ENCODE measurements at regions of chr18 and their contacts with region 1.

Region 1: GRCh38 chr18:79951578-79952455 is at the start of gene SLC66A2:
- DNase-seq: peak; percentile 80 to 98 (median 90)
- ATAC-seq: peak; percentile 94
- H3K4me3 ChIP-seq: peak within 1 kb of the TSS; percentile 65
- H3K4me3 Mint-ChIP-seq: peak within 1 kb of the TSS; percentile 78 to 93 (median 87)
- H3K27ac ChIP-seq: peak within 1 kb of the TSS; percentile 88
- H3K27ac Mint-ChIP-seq: peak within 1 kb of the TSS; percentile 55 to 90 (median 80)
- H3K4me1 ChIP-seq: peaks cover 7 to 25% of the 10 kb centered on the region in 2 donors
- H3K4me1 Mint-ChIP-seq: peaks cover 16 to 37% (median 32%) of the 10 kb centered on the region in 7 donors
- H3K27me3 ChIP-seq: no peaks in the 10 kb centered on the region
- H3K27me3 Mint-ChIP-seq: no peaks in the 10 kb centered on the region
- total RNA-seq, gene SLC66A2: 30.7 to 106 (median 40.4) TPM

Region 2: DNA sequence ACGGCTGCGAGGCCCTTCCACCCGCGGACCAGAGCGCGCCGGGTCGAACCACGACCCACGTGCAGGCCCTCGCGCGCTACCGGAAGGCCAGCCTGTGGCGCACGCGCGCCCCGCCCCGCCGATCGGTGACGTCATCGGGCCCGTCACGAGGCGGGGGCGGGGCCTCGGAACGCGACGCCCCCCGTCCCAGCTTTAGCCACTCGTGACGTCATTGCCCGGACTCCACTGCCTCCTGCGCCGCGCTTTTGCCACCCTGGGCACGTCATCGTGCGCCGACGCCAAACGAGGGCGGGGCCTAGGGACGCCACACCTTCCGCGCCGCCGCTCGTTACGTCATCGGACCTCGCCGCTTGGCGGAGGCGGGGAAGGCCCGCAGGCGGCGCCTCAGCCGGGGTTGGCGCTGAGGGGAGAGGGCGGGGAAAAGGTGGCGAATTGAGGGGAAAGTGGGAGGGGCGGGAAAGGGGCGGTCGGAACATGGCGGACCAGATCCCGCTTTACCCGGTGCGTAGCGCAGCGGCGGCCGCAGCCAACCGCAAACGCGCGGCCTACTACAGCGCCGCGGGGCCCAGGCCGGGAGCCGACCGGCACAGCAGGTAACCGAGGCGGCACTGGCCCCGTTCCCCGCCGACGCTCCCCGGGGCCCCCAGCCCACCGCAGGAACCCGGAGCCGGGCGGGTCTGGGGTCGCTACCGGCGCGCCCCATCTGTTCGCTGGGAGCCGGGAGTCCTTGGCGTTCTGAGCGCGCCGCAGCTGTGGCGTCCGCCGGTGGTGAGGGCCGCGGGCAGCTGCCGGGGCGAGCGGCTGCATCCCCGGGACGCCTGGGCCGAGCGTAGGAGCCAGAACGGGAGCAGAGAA is 882.7 kb before region 1 on chr18 and contains the start of gene ATP9B:
- CTCF ChIA-PET with region 1: no interaction called
- POLR2A ChIA-PET with region 1: no interaction called
- intact Hi-C with region 1: loop called (anchors 2 kb)
- DNase-seq: peak; percentile 97 to 100 (median 99)
- ATAC-seq: peak; percentile 91
- H3K4me3 ChIP-seq: peak within 1 kb of the TSS; percentile 59
- H3K4me3 Mint-ChIP-seq: peak within 1 kb of the TSS; percentile 85 to 98 (median 94)
- H3K27ac ChIP-seq: peak within 1 kb of the TSS; percentile 98
- H3K27ac Mint-ChIP-seq: peak within 1 kb of the TSS; percentile 98 to 100 (median 99)
- H3K4me1 ChIP-seq: peaks cover 12 to 29% of the 10 kb centered on the region in 2 donors
- H3K4me1 Mint-ChIP-seq: peaks cover 28 to 63% (median 51%) of the 10 kb centered on the region in 7 donors
- H3K27me3 ChIP-seq: no peaks in the 10 kb centered on the region
- H3K27me3 Mint-ChIP-seq: peaks cover under 1 to 21% (median 5%) of the 10 kb centered on the region in 5 donors
- total RNA-seq, gene ATP9B: 36.1 to 90.5 (median 90.0) TPM

Region 3: GRCh38 chr18:79400091-79400590 is 551.7 kb before region 1 on chr18:
- CTCF ChIA-PET with region 1: no interaction called
- POLR2A ChIA-PET with region 1: interaction called, 4 read pairs
- intact Hi-C with region 1: loop called (anchors 5 kb)
- DNase-seq: peak in 8 of 9 donors; percentile 38 to 65 (median 52)
- ATAC-seq: peak; percentile 45
- H3K4me3 ChIP-seq: peak overlapping the region; percentile 52
- H3K4me3 Mint-ChIP-seq: peak overlapping the region in 2 of 10 donors; percentile 90 to 91
- H3K27ac ChIP-seq: peak overlapping the region; percentile 95
- H3K27ac Mint-ChIP-seq: no peak overlapping the region
- H3K4me1 ChIP-seq: peaks cover 22 to 43% of the 10 kb centered on the region in 2 donors
- H3K4me1 Mint-ChIP-seq: peaks cover 31 to 64% (median 52%) of the 10 kb centered on the region in 7 donors
- H3K27me3 ChIP-seq: no peaks in the 10 kb centered on the region
- H3K27me3 Mint-ChIP-seq: no peaks in the 10 kb centered on the region

Region 4: GRCh38 chr18:79528846-79529245 is 423.0 kb before region 1 on chr18:
- CTCF ChIA-PET with region 1: no interaction called
- POLR2A ChIA-PET with region 1: no interaction called
- intact Hi-C with region 1: loop called in 1 of 2 experiments (anchors 10 kb)
- DNase-seq: peak; percentile 47 to 88 (median 77)
- ATAC-seq: peak; percentile 65
- H3K4me3 ChIP-seq: no peak overlapping the region
- H3K4me3 Mint-ChIP-seq: peak overlapping the region in 1 of 10 donors; percentile 6
- H3K27ac ChIP-seq: no peak overlapping the region
- H3K27ac Mint-ChIP-seq: peak overlapping the region in 6 of 9 donors; percentile 30 to 85 (median 79)
- H3K4me1 ChIP-seq: peaks cover 8 to 21% of the 10 kb centered on the region in 2 donors
- H3K4me1 Mint-ChIP-seq: peaks cover 7 to 49% (median 33%) of the 10 kb centered on the region in 7 donors
- H3K27me3 ChIP-seq: no peaks in the 10 kb centered on the region
- H3K27me3 Mint-ChIP-seq: no peaks in the 10 kb centered on the region

Region 5: DNA sequence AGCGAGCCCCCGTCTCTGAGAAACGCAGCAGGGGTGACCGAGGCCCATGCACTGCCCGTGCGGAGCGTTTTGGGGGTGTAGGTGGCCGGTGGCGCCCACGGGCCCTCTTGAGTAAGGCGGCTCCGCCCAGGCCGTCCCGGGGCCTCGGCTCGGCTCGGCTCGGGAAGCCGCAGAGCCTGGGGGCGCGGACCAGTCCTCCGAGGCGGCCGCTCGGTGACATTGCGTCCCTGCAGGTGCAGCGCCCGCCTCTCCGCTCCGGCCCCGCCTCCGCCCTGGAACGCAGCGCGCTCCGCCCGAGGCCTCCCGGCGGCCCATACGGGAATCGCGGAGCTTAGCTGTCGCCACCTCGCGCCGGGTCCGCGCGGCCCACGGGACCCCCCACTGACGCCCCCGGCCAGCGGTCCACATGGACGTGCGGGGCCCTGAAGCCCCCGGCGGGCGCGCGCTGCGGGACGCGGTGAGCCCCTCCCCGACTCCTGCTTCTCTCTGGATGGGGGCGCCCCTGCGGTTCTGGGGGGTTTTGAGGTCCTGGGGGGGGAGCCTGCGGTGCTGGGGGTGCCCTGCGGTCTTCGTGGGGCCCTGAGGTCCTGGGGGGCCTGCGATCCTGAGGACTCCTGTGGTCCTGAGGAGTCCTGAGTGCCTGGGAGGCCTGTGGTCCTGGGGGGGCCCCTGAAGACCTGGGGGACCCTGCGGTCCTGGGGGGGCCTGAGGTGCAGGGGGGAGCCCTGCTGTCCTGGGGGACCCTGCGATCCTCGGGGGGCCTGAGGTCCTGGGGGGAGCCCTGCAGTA is 12.7 kb after region 1 on chr18 and contains the start of gene HSBP1L1:
- CTCF ChIA-PET with region 1: interaction called, 3 read pairs
- POLR2A ChIA-PET with region 1: interaction called, 8 read pairs
- intact Hi-C with region 1: loop called (anchors 1 kb)
- DNase-seq: peak; percentile 60 to 75 (median 69)
- ATAC-seq: peak; percentile 89
- H3K4me3 ChIP-seq: peak within 1 kb of the TSS; percentile 22
- H3K4me3 Mint-ChIP-seq: peak within 1 kb of the TSS; percentile 81 to 93 (median 90)
- H3K27ac ChIP-seq: peak within 1 kb of the TSS; percentile 89
- H3K27ac Mint-ChIP-seq: peak within 1 kb of the TSS; percentile 88 to 96 (median 94)
- H3K4me1 ChIP-seq: peaks cover 14 to 19% of the 10 kb centered on the region in 2 donors
- H3K4me1 Mint-ChIP-seq: peaks cover 9 to 47% (median 20%) of the 10 kb centered on the region in 7 donors
- H3K27me3 ChIP-seq: no peaks in the 10 kb centered on the region
- H3K27me3 Mint-ChIP-seq: no peaks in the 10 kb centered on the region
- total RNA-seq, gene HSBP1L1: 13.7 to 44.9 (median 41.7) TPM

Region 6: GRCh38 chr18:80034068-80034851 is 82.4 kb after region 1 on chr18 and contains the start of gene RBFA:
- CTCF ChIA-PET with region 1: interaction called, 3 read pairs
- POLR2A ChIA-PET with region 1: interaction called, 3 read pairs
- intact Hi-C with region 1: loop called (anchors 1 kb)
- DNase-seq: peak; percentile 95 to 100 (median 98)
- ATAC-seq: peak; percentile 88
- H3K4me3 ChIP-seq: peak within 1 kb of the TSS; percentile 83
- H3K4me3 Mint-ChIP-seq: peak within 1 kb of the TSS; percentile 84 to 95 (median 91)
- H3K27ac ChIP-seq: peak within 1 kb of the TSS; percentile 87
- H3K27ac Mint-ChIP-seq: peak within 1 kb of the TSS; percentile 86 to 99 (median 96)
- H3K4me1 ChIP-seq: peaks cover 8 to 14% of the 10 kb centered on the region in 2 donors
- H3K4me1 Mint-ChIP-seq: peaks cover 22 to 36% (median 29%) of the 10 kb centered on the region in 7 donors
- H3K27me3 ChIP-seq: no peaks in the 10 kb centered on the region
- H3K27me3 Mint-ChIP-seq: no peaks in the 10 kb centered on the region
- total RNA-seq, gene RBFA: 17.6 to 23.5 (median 21.7) TPM

Measured in naive thymus-derived CD4-positive, alpha-beta T cell (primary cell).